AG04450 (cell line): ENCODE measurements at regions of chr7 and their contacts with region 1.

Region 1: DNA sequence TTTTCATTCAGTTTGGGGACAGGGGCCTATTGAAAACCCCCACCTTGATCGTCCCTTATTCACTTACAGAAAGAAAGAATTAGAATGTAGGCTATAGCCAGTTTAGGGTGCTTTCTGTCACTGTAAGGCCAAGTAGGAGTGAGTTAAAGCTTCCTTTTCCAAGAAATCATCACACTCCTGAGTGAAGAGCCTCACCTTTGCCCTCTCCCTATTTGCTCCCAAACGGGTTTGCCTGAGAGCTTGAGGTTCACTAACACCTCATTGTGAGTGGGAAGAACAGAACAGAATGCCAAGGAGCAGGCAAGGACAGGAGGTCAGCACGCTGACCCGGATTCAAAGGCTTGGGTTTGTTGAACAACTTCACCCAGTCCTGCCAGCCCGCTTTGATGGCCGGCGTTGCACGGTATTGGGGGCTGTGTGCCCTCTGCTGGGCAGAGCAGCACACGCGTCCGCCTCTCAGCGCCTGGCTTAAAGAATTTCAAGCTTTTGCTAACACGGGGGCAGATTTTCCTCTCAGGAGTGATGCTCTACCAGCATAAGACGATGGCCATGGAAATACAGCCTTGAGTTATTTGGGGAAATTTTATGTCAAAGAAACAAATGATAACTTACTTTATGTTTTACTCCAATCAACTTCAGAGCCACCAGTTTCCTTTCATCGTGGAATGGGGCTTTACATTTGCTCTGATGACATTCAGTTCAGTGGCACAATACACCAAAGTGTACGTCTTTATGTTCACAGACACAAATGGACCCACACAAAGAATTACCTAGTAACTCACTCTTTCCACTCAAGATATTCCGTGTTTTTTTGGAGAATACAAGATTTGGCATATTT is 470.0 kb downstream of the SUGCT start:
- DNase-seq: peak; percentile 21
- H3K4me3 ChIP-seq: no peak overlapping the region
- H3K27ac ChIP-seq: no peak overlapping the region
- H3K27me3 ChIP-seq: no peaks in the 10 kb centered on the region
- CTCF ChIP-seq: peak; percentile 84

Region 2: DNA sequence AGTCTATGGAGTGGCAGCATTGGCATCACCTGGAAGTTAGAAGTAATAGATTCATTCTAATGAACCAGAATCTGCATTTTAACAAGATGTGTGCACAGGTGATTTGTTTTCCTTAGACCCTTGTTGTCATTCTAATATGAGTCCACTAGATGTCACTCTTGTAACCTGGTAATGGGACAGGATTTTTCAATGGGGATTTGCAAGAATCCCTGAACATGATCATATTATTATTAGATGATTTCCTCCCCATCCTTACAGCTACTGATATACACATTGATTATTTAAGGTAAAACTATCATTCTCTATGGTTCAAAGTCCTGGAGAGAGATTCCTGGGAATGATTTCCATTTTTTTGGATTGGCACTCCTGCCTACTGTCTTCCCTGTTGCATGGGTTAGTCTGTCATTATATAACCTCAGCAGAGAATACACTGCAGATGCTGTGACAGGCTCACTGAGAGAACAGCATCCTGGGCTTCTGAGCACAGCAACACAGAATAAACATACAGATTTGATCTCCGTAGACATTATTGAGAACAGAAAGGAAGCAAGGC is 275.1 kb before region 1 on chr7:
- CTCF ChIA-PET with region 1: interaction called, 97 read pairs
- POLR2A ChIA-PET with region 1: no interaction called
- DNase-seq: peak; percentile 32
- H3K4me3 ChIP-seq: no peak overlapping the region
- H3K27ac ChIP-seq: no peak overlapping the region
- H3K27me3 ChIP-seq: no peaks in the 10 kb centered on the region
- CTCF ChIP-seq: peak; percentile 73

Region 3: DNA sequence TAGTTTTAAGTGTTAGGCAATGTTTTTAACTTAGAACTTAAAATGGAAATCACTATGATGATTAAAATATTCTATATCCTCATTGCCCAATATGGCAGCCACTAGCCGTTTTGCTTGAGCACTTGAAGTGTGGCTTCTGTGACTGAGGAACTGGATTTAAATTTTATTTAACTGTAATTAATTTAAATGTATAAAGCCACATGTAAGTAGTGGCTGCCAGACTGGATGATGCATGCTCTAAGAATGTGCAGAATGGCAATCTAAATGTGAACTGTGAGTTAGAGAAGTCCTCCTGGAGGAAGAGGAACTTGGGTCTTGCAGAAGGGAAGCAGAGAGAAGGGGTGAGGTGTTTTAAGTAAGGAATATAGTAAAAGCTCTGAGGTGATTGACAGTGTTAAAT is 18.6 kb before region 1 on chr7:
- CTCF ChIA-PET with region 1: interaction called, 15 read pairs
- POLR2A ChIA-PET with region 1: no interaction called
- DNase-seq: no peak
- H3K4me3 ChIP-seq: no peak overlapping the region
- H3K27ac ChIP-seq: no peak overlapping the region
- H3K27me3 ChIP-seq: no peaks in the 10 kb centered on the region
- CTCF ChIP-seq: no peak

Region 4: GRCh38 chr7:40619647-40620046 is 14.8 kb after region 1 on chr7:
- CTCF ChIA-PET with region 1: interaction called, 19 read pairs
- POLR2A ChIA-PET with region 1: no interaction called
- DNase-seq: no peak
- H3K4me3 ChIP-seq: no peak overlapping the region
- H3K27ac ChIP-seq: no peak overlapping the region
- H3K27me3 ChIP-seq: no peaks in the 10 kb centered on the region
- CTCF ChIP-seq: no peak